Activated CD8-positive, alpha-beta T cell treated with anti-CD3 and anti-CD28 coated beads, Interleukin-2, amount 10 ng/mL, durations not matched to agents 7 days and 5 days (primary cell): ENCODE measurements at regions of chr1 and their contacts with region 1.

Region 1: DNA sequence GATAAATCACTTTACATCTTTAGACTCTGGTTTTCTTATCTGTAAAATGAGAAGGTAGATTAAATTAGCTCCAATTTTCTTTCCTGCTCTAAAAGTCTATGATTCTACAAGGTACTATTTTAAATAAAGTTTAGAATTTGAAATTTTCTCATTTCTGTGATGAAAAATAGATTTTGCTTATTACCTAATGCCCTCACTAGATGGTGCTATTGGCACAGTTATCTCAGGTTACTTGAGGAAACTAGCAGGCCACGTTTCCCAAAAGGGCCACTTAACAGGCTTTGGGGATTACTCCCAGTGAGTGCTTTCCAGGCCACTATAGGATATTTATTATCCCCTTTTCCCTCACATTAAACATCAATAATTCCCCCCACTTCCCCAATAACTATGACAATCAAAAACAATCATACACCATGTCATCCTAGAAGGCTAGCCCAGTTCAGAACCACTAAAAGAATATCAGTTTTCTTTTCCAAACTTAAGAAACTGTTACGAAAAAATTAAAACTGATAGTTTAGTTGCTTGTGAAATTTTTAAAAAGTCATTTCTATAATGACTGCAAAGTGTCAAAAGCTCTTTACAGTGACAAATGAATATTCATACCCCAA is 30.6 kb downstream of the OMA1 start:
- DNase-seq: peak; percentile 40
- ATAC-seq: no peak
- H3K4me3 Mint-ChIP-seq: no peak overlapping the region
- H3K27ac Mint-ChIP-seq: no peak overlapping the region
- H3K4me1 Mint-ChIP-seq: peaks cover 5% of the 10 kb centered on the region
- H3K27me3 Mint-ChIP-seq: no peaks in the 10 kb centered on the region

Region 2: GRCh38 chr1:58528518-58528917 is 12.6 kb after region 1 on chr1:
- CTCF ChIA-PET with region 1: interaction called, 37 read pairs
- POLR2A ChIA-PET with region 1: no interaction called
- DNase-seq: no peak
- ATAC-seq: no peak
- H3K4me3 Mint-ChIP-seq: no peak overlapping the region
- H3K27ac Mint-ChIP-seq: no peak overlapping the region
- H3K4me1 Mint-ChIP-seq: no peaks in the 10 kb centered on the region
- H3K27me3 Mint-ChIP-seq: no peaks in the 10 kb centered on the region

Region 3: DNA sequence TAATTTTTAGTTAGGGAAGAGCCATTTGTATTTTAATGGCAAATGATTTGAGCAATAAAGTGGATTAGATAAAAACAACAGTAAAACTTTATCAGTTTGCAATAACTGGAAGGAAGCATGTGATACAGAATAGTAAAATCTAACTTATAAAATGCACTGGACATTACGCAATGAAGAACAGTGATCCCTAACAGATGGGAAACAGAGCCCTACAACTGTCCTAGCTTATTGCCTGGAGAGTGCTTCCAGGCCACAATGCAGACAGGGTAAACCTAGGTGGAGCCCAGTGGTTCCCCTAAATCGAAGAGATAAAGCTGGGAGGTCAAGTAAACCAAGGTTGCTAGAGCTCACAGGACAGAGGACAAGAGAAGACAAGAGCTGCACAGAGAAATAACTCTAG is 23.7 kb after region 1 on chr1:
- CTCF ChIA-PET with region 1: interaction called, 78 read pairs
- POLR2A ChIA-PET with region 1: no interaction called
- DNase-seq: no peak
- ATAC-seq: no peak
- H3K4me3 Mint-ChIP-seq: no peak overlapping the region
- H3K27ac Mint-ChIP-seq: no peak overlapping the region
- H3K4me1 Mint-ChIP-seq: no peaks in the 10 kb centered on the region
- H3K27me3 Mint-ChIP-seq: no peaks in the 10 kb centered on the region

Region 4: DNA sequence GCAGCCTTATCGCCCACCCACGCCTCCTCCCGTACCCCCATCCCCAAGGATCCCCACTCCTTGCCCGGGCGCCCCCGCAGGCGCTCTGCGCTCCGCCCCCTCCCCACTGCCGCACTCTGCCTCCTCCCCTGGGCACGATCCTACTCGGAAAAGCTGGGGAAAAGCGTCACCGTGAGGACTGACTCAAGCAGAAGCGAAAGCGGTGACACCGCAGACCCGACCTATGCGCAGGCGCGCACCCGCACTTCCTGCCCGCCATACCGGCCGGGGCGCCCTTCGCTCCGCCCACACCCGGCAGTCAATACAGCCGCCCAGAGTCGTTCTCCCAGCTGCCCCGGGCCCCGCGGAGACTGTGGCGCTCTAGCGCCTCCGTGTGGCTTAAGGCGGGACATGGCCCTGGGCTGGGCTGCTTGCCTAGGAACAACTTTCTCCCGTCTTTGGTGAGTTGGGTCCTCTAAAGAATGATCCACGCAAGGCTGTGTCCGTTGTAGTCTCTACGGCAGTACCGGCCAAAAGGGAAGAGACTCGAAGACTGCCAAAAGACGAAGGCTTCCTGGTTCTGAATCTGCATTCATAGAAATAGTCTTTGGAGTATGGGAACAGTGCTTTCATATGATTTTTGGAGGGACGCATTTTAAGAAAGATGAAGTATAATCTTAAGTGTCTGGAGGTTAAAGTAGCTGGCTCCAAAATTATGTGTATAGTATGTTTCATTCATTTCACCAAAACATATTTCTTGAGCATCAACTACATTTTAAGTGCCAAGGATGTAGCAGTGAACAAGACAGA is 30.8 kb after region 1 on chr1 and contains the start of gene OMA1:
- CTCF ChIA-PET with region 1: interaction called, 78 read pairs
- POLR2A ChIA-PET with region 1: interaction called, 4 read pairs
- DNase-seq: peak; percentile 97
- ATAC-seq: peak; percentile 96
- H3K4me3 Mint-ChIP-seq: peak within 1 kb of the TSS; percentile 91
- H3K27ac Mint-ChIP-seq: peak within 1 kb of the TSS; percentile 98
- H3K4me1 Mint-ChIP-seq: peaks cover 16% of the 10 kb centered on the region
- H3K27me3 Mint-ChIP-seq: peaks cover 3% of the 10 kb centered on the region
- total RNA-seq, gene OMA1: 22.3 to 23.9 TPM

Region 5: GRCh38 chr1:58652651-58653184 is 136.8 kb after region 1 on chr1:
- CTCF ChIA-PET with region 1: interaction called, 66 read pairs
- POLR2A ChIA-PET with region 1: interaction called, 3 read pairs
- DNase-seq: peak; percentile 80
- ATAC-seq: peak; percentile 85
- H3K4me3 Mint-ChIP-seq: no peak overlapping the region
- H3K27ac Mint-ChIP-seq: no peak overlapping the region
- H3K4me1 Mint-ChIP-seq: peaks cover 34% of the 10 kb centered on the region
- H3K27me3 Mint-ChIP-seq: no peaks in the 10 kb centered on the region